Activated naive CD4-positive, alpha-beta T cell treated with anti-CD3 and anti-CD28 coated beads, Interleukin-2, amount 10 ng/mL, durations not matched to agents 7 days and 5 days (primary cell): ENCODE measurements at regions of chr9 and their contacts with region 1.

Region 1: GRCh38 chr9:76810377-76810957 is 46.2 kb downstream of the PCA3 start:
- DNase-seq: peak; percentile 47
- H3K4me3 Mint-ChIP-seq: no peak overlapping the region
- H3K27ac Mint-ChIP-seq: no peak overlapping the region
- H3K4me1 Mint-ChIP-seq: no peaks in the 10 kb centered on the region
- H3K27me3 Mint-ChIP-seq: no peaks in the 10 kb centered on the region

Region 2: GRCh38 chr9:76784881-76785280 is 25.6 kb before region 1 on chr9:
- CTCF ChIA-PET with region 1: no interaction called
- DNase-seq: no peak
- H3K4me3 Mint-ChIP-seq: no peak overlapping the region
- H3K27ac Mint-ChIP-seq: no peak overlapping the region
- H3K4me1 Mint-ChIP-seq: no peaks in the 10 kb centered on the region
- H3K27me3 Mint-ChIP-seq: peaks cover 4% of the 10 kb centered on the region

Region 3: DNA sequence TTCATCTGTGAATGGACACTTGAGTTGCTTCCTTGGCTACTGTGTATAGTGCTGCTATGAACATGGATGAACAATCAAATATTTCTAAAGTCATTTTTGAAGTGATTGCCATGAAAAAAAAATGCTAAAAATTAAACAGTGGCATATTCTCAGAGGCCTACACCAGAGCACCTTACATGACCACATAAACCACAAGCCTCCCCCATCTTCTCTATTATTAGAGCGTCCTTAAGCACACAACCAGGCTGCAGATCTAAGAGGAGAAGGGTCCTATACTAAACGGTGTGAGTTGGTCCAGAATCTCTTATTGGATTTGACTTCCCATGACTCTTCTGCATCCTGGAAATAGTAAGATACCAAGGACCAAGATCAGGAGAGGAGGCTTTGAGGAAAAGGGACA is 11.9 kb before region 1 on chr9:
- CTCF ChIA-PET with region 1: no interaction called
- DNase-seq: no peak
- H3K4me3 Mint-ChIP-seq: no peak overlapping the region
- H3K27ac Mint-ChIP-seq: no peak overlapping the region
- H3K4me1 Mint-ChIP-seq: no peaks in the 10 kb centered on the region
- H3K27me3 Mint-ChIP-seq: no peaks in the 10 kb centered on the region

Region 4: DNA sequence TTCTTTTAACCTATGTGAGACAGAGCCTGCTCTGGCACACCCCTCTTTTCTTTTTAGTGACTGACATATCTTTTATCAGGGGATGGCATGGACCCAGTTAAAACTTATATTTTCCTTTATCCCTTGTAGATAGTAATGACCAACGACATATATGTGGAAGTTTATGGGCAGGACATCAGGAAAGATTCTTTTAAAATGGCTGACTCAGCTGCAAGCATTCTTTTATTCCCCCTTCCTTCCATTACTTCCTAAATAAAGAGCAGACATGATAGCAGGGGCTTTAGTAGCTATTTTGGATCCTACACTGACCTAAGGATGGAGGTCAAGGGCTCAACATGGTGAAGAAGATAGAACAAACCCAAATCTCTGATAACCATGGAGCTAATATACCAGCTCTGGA is 341.8 kb after region 1 on chr9:
- CTCF ChIA-PET with region 1: interaction called, 11 read pairs
- DNase-seq: no peak
- H3K4me3 Mint-ChIP-seq: no peak overlapping the region
- H3K27ac Mint-ChIP-seq: no peak overlapping the region
- H3K4me1 Mint-ChIP-seq: no peaks in the 10 kb centered on the region
- H3K27me3 Mint-ChIP-seq: peaks cover 14% of the 10 kb centered on the region